ENCODE measurements at regions of chr2 and their contacts with region 1.

Region 1: DNA sequence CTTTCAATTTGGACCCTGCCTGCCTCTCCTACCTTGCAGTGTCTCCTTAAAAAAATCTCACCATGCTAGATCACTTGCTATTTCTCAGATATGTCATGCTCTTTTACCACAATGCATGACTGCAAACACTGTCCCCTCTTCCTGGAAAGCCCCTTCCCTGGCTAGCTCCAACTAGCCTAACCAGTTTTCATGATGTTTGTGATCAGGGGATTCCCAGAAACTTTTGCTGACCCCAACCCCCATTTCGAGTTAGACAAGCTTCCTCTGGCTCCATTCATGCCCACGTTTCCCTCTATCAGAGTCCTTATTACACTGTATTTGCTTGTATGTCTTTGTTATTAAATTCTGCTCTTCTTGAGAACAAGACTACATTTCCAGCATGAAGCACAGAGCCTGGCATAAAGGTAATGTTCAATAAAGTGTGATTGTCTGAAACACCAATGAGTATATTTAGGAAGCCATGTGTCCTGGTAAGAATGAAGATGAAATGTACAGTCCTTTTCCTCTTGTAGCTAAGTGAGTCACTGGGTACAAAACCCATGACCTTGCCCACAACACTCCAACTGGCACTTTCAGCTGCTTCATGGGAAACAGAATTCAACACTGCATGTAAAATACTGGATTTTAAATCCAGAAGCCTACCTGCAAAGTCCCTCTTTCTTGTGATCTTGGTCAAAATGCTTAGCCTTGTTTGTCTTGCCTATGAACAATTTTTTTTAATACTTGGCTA is 62.0 kb upstream of the ATL2 start:
- DNase-seq: peak; percentile 49 to 71
- H3K4me3 ChIP-seq: no peak overlapping the region; the same call in 1 of the 2 replicates
- H3K27ac ChIP-seq: peak overlapping the region; percentile 62
- H3K4me1 ChIP-seq: peaks cover 72% of the 10 kb centered on the region
- H3K27me3 ChIP-seq: no peaks in the 10 kb centered on the region
- CTCF ChIP-seq: no peak

Region 2: DNA sequence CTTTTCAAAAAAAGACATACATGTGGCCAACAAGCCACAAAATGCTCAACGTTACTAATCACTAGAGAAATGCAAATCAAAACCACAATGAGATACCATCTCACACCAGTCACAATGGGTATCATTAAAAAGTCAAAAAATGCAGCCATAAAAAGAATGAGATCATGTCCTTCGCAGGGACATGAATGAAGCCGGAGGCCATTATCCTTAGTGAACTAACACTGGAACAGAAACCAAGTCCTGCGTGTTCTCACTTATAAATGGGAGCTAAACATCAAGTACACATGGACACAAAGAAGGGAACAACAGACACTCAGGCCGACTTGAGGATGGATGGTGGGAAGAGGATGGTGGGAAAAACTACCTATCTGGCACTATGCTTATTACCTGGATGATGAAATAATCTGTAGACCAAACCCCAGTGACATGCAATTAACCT is 44.1 kb before region 1 on chr2:
- CTCF ChIA-PET with region 1: no interaction called
- POLR2A ChIA-PET with region 1: no interaction called
- intact Hi-C with region 1: loop called (anchors 5 kb)
- DNase-seq: peak; percentile 37 to 96
- H3K4me3 ChIP-seq: no peak overlapping the region; the same call in 1 of the 2 replicates
- H3K27ac ChIP-seq: peak overlapping the region; percentile 81
- H3K4me1 ChIP-seq: peaks cover 33% of the 10 kb centered on the region
- H3K27me3 ChIP-seq: no peaks in the 10 kb centered on the region
- CTCF ChIP-seq: no peak

Region 3: GRCh38 chr2:38409156-38410122 is 29.6 kb before region 1 on chr2:
- CTCF ChIA-PET with region 1: interaction called, 3 read pairs
- POLR2A ChIA-PET with region 1: no interaction called
- intact Hi-C with region 1: loop called (anchors 5 kb)
- DNase-seq: peak; percentile 44 to 82
- H3K4me3 ChIP-seq: no peak overlapping the region
- H3K27ac ChIP-seq: no peak overlapping the region
- H3K4me1 ChIP-seq: 0 out of 2 replicates have a peak, but pooled peaks cover 10% of the 10 kb centered on the region
- H3K27me3 ChIP-seq: no peaks in the 10 kb centered on the region
- CTCF ChIP-seq: no peak

Region 4: GRCh38 chr2:38465789-38466127 is 26.7 kb after region 1 on chr2:
- CTCF ChIA-PET with region 1: interaction called, 21 read pairs
- POLR2A ChIA-PET with region 1: no interaction called
- intact Hi-C with region 1: loop called (anchors 1 kb)
- DNase-seq: peak in 1 of 2 experiments; percentile 32
- H3K4me3 ChIP-seq: no peak overlapping the region
- H3K27ac ChIP-seq: no peak overlapping the region
- H3K4me1 ChIP-seq: peaks cover 28% of the 10 kb centered on the region
- H3K27me3 ChIP-seq: no peaks in the 10 kb centered on the region
- CTCF ChIP-seq: peak; percentile 79

Region 5: DNA sequence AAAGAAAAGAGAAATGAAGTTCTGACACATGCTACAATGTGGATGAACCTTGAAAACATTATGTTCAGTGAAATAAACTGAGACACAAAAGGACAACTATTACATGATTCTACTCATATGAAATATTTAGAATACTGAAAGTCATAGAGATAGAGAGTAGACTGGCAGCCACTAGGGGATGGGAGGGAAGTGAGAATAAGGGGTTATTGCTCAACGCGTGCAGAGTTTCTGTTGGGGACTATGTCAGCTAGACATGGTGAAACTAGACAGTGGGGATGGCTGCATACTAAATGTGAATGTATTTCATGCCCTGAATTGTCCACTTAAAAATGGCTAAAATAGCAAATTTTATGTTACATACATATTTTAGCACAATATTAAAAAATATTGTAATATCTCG is 46.7 kb after region 1 on chr2:
- CTCF ChIA-PET with region 1: no interaction called
- POLR2A ChIA-PET with region 1: no interaction called
- intact Hi-C with region 1: no loop called
- DNase-seq: no peak
- H3K4me3 ChIP-seq: no peak overlapping the region
- H3K27ac ChIP-seq: no peak overlapping the region
- H3K4me1 ChIP-seq: no peaks in the 10 kb centered on the region
- H3K27me3 ChIP-seq: no peaks in the 10 kb centered on the region
- CTCF ChIP-seq: no peak